Panc1 (cell line): ENCODE measurements at regions of chr5 and their contacts with region 1.

Region 1: GRCh38 chr5:141701360-141702119 is 19.5 kb upstream of the ARAP3 start:
- DNase-seq: no peak
- ATAC-seq: peak; percentile 24; the same call in 1 of the 2 replicates
- H3K4me3 ChIP-seq: peak overlapping the region in 1 of 2 experiments; percentile 63; a peak in 1 of 4 replicates
- H3K27ac ChIP-seq: no peak overlapping the region
- H3K4me1 ChIP-seq: peaks cover 5% of the 10 kb centered on the region; the same call in 1 of the 2 replicates
- H3K27me3 ChIP-seq: peaks cover 18% of the 10 kb centered on the region
- CTCF ChIP-seq: no peak

Region 2: GRCh38 chr5:141524604-141525597 is 176.6 kb before region 1 on chr5:
- CTCF ChIA-PET with region 1: no interaction called
- POLR2A ChIA-PET with region 1: no interaction called
- in situ Hi-C with region 1: no loop called
- intact Hi-C with region 1: no loop called
- DNase-seq: peak; percentile 84
- ATAC-seq: peak; percentile 90
- H3K4me3 ChIP-seq: no peak overlapping the region
- H3K27ac ChIP-seq: peak overlapping the region; percentile 51
- H3K4me1 ChIP-seq: peaks cover 35% of the 10 kb centered on the region
- H3K27me3 ChIP-seq: no peaks in the 10 kb centered on the region
- CTCF ChIP-seq: peak; percentile 100

Region 3: DNA sequence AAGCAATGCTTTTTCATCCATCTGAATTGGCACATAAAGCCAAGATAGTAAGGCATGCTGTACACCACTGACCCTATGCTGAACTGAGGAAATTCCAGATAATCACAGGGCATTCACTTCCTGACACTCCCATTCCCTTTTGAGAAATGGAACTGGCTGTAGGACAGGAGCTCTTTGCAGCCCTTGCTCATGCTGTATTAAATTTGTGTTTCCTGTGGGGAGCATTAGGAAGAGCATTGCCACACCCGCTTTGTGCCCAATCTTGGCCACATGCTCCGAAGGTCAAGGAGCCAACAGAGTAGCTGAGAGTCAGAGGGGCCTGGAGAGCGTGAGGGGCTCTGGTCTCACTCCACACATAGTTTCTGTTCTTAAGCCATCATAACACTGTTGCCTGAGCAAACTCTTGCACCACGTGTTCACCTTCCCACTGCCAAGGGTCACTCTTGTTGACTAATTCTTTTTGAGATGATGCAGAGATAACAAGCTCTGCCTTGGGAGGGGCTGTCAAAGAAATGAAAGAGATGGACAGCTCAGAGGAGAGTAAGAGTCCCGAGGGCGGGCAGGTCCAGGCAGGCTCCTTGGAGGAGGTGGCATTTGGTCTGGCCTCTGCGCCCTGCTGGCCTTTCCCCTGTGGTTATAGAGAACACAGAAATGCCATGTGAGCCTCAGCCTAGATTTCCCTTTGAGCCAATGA is 12.2 kb after region 1 on chr5:
- CTCF ChIA-PET with region 1: interaction called, 11 read pairs
- POLR2A ChIA-PET with region 1: no interaction called
- in situ Hi-C with region 1: no loop called
- intact Hi-C with region 1: no loop called
- DNase-seq: no peak
- ATAC-seq: peak; percentile 71
- H3K4me3 ChIP-seq: no peak overlapping the region
- H3K27ac ChIP-seq: peak overlapping the region; percentile 83
- H3K4me1 ChIP-seq: peaks cover 37% of the 10 kb centered on the region
- H3K27me3 ChIP-seq: no peaks in the 10 kb centered on the region
- CTCF ChIP-seq: no peak

Region 4: DNA sequence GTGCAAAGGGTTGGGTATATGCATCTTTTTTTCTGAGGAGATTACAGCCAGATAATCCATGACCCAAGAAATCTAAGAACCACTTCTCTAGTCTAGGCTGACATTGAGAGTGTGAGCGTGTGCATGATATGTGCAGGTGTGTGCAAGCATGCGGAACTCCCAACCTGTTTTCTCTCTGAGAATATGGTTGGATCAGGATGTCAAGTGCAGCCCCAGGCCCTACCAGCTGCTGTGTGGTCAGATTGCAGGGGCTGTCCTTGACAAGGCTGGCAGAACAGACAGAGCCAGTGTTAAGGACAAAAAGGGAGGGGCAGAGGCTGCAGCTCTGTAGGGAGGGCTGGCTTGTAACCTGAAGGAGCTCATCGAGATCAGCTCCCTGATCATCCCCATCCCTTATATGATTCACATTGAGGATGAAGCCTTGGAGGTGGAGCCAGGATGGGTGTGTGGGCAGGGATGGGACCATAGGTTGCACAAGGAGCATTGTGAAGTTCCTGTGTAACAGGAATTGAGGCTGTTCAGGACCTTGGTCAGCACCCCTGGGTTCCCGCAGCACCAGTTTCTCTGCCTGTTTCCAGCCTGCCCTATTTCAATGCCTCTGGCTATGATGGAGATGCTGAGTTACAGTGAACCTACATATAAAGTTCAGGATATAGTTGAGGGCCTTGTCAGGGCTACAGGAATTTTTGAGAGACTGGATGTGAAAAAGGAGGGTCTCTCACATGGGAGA is 33.1 kb after region 1 on chr5:
- CTCF ChIA-PET with region 1: interaction called, 12 read pairs
- POLR2A ChIA-PET with region 1: no interaction called
- in situ Hi-C with region 1: no loop called
- intact Hi-C with region 1: no loop called
- DNase-seq: no peak
- ATAC-seq: peak; percentile 46; the same call in 1 of the 2 replicates
- H3K4me3 ChIP-seq: no peak overlapping the region
- H3K27ac ChIP-seq: no peak overlapping the region
- H3K4me1 ChIP-seq: no peaks in the 10 kb centered on the region
- H3K27me3 ChIP-seq: peaks cover 2% of the 10 kb centered on the region; the same call in 1 of the 2 replicates
- CTCF ChIP-seq: no peak

Region 5: DNA sequence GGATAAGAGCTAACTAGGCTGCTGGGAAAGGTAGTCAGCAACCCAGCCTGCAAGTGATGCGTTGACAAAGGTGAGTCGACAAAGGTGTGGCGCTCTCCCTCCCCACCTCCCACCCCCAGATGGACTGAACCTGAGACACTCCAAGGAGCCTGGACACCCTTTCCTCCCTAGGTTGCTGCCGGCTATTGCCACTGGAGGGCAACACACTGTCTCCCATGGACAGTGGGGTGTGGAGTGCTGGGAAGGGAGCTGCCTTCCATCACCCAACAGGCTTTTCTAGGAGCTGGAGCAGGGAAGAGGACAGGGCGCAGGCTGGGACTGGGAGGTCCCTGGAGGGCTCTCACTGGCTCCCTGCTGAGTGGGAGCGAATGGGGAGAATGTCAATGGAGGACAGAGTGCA is 55.9 kb after region 1 on chr5:
- CTCF ChIA-PET with region 1: no interaction called
- POLR2A ChIA-PET with region 1: no interaction called
- in situ Hi-C with region 1: no loop called
- intact Hi-C with region 1: no loop called
- DNase-seq: no peak
- ATAC-seq: peak; percentile 81
- H3K4me3 ChIP-seq: no peak overlapping the region
- H3K27ac ChIP-seq: no peak overlapping the region
- H3K4me1 ChIP-seq: no peaks in the 10 kb centered on the region; the same call in 1 of the 2 replicates
- H3K27me3 ChIP-seq: peaks cover 2% of the 10 kb centered on the region; the same call in 1 of the 2 replicates
- CTCF ChIP-seq: peak; percentile 58; the same call in 1 of the 2 replicates

Region 6: DNA sequence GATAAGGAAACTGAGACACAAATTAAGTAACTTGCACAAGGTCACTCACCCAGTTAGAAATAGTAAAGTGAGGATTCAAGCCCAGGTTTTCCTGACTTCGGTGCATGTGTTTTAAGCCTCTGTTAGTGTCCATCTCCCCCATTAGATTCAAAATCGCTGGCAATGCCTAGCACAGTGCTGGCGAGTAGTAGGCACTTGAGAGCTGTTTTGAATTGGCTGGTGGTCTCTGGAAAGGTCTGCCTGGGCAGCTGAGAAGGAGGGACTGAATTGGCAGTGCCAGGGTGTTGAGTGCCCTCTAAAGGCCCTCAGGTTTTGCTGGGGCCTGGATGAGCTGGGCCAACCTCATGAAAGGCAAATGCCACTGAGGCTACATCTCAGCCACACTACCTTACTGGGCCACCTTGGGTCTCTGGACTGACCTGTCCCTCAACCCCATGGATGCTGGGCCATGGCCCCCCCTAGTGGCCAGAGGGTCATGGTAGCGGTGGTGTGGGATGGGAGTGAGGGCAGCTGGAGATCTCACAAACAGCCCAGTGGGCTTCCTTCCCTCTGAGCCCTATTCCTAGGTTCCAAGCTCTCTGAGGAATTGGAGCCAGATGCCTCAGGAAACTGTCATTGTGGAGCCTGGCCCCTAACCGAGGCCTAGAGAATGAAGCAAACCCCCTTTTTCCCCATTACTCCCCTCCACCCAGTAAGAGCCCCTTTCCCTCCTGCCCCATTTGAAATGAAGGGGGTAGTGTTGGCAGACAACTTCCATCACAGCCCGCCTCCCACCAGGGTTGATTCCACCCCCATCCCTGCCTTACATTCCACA is 112.5 kb after region 1 on chr5:
- CTCF ChIA-PET with region 1: interaction called, 11 read pairs
- POLR2A ChIA-PET with region 1: interaction called, 3 read pairs
- in situ Hi-C with region 1: no loop called
- intact Hi-C with region 1: loop called (anchors 2 kb)
- DNase-seq: peak; percentile 22
- ATAC-seq: peak; percentile 89
- H3K4me3 ChIP-seq: no peak overlapping the region
- H3K27ac ChIP-seq: no peak overlapping the region
- H3K4me1 ChIP-seq: no peaks in the 10 kb centered on the region
- H3K27me3 ChIP-seq: no peaks in the 10 kb centered on the region
- CTCF ChIP-seq: peak; percentile 86

Region 7: DNA sequence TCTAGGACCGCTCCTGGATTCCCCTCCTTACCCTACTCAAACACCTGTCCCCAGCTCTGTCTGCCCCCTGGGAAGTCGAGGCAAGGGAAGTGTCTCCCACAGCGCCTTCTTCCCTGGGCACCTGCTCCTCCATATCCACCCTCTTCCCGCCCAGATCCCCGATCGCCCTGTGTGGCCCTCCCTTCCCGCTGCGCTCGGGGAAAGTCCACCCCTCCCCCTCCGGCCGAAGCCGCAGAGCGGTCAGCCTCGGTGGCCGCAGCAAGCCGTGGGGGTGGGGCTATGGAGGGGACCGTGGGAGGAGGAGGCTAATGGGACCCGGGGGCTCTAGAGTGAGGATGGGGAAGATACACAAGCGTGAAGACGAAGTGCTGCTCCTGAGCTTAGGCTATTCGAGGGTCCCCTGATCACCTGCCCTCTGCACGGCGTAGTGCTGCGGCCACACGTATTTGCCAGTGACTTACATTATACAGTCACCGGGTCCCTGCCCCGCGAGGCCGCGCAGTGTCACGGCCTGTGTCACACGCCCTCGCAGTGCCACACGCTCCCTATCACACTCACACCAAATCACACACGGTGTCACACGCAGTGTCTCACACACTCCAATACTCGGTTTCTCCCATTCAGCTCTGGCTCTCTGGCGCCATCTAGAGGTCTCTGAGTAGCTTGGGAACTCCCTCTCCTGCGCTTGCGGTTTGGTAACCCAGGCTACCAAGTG is 177.3 kb after region 1 on chr5:
- CTCF ChIA-PET with region 1: interaction called, 19 read pairs
- POLR2A ChIA-PET with region 1: interaction called, 3 read pairs
- in situ Hi-C with region 1: no loop called
- intact Hi-C with region 1: loop called (anchors 2 kb)
- DNase-seq: peak; percentile 86
- ATAC-seq: peak; percentile 84
- H3K4me3 ChIP-seq: peak overlapping the region; percentile 43 to 75
- H3K27ac ChIP-seq: no peak overlapping the region
- H3K4me1 ChIP-seq: peaks cover 14% of the 10 kb centered on the region
- H3K27me3 ChIP-seq: peaks cover 11% of the 10 kb centered on the region
- CTCF ChIP-seq: peak; percentile 97

Region 8: GRCh38 chr5:141960449-141961202 is 259.1 kb after region 1 on chr5:
- CTCF ChIA-PET with region 1: interaction called, 4 read pairs
- POLR2A ChIA-PET with region 1: no interaction called
- in situ Hi-C with region 1: no loop called
- intact Hi-C with region 1: loop called (anchors 2 kb)
- DNase-seq: peak; percentile 64
- ATAC-seq: peak; percentile 94
- H3K4me3 ChIP-seq: no peak overlapping the region
- H3K27ac ChIP-seq: no peak overlapping the region
- H3K4me1 ChIP-seq: no peaks in the 10 kb centered on the region
- H3K27me3 ChIP-seq: no peaks in the 10 kb centered on the region
- CTCF ChIP-seq: peak; percentile 87